ENCODE measurements at regions of chr1 and their contacts with region 1.

Region 1: DNA sequence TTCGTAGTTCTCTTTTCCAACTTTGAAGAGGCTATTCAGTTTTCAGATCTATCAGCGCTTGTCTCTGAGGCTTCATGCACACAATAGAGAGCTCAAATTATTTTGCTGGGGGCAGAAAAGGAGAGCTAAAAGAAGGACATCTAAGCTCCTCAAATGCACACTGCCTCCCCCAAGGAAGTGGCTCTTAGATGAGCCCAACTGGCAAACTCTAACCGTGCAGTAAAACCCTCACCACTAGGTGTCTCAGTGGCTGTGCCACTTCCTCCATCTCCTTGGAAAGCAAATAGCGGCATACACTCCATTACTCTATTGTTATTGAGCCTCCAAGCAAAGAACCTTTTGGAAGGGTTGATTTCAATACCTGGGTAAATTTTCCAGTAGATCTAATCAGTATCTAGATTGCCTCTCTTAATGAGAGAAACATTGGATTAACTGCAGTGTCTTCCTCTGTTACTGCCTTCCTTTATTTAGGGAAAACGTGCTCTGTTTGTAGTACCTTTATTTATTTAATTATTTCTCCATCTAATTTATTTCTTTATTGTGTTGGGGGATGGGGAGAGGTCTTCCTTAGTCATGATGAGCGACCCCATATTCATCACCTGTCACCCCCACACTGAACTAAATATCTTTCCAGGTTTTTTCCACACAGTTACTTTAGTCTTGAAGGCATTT is 9.2 kb upstream of the SFPQ start:
- DNase-seq: peak; percentile 40
- ATAC-seq: peak; percentile 100
- H3K4me3 ChIP-seq: no peak overlapping the region
- H3K27ac ChIP-seq: no peak overlapping the region
- H3K4me1 ChIP-seq: no peaks in the 10 kb centered on the region
- H3K27me3 ChIP-seq: no peaks in the 10 kb centered on the region
- CTCF ChIP-seq: peak; percentile 92 to 93 (median 92); a peak in 5 of 6 replicates
- EP300 ChIP-seq: no peak
- POLR2A ChIP-seq: no peak
- RAD21 ChIP-seq: peak; percentile 87

Region 2: DNA sequence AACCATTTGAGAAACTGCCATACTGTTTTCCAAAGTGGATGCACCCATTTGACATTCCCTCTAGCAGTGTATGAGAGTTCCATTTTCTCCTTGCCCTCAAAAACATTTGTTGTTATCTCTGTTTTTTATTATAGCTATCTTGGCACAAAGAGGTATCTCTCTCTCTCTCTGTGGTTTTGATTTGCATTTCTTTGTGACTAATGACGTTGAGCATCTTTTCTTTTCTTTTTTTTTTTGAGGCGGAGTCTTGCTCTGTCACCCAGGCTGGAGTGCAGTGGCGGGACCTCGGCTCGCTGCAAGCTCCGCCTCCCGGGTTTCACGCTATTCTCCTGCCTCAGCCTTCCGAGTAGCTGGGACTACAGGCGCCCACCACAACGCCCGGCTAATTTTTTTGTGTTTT is 153.1 kb before region 1 on chr1:
- CTCF ChIA-PET with region 1: no interaction called
- POLR2A ChIA-PET with region 1: no interaction called
- RAD21 ChIA-PET with region 1: no interaction called
- SMC1A ChIA-PET with region 1: no interaction called
- in situ Hi-C with region 1: no loop called
- intact Hi-C with region 1: no loop called
- DNase-seq: no peak
- ATAC-seq: no peak
- H3K4me3 ChIP-seq: no peak overlapping the region
- H3K27ac ChIP-seq: no peak overlapping the region
- H3K4me1 ChIP-seq: no peaks in the 10 kb centered on the region
- H3K27me3 ChIP-seq: no peaks in the 10 kb centered on the region
- CTCF ChIP-seq: no peak
- EP300 ChIP-seq: no peak
- POLR2A ChIP-seq: no peak
- RAD21 ChIP-seq: no peak

Region 3: GRCh38 chr1:35229587-35230360 is 27.6 kb after region 1 on chr1:
- CTCF ChIA-PET with region 1: interaction called, 6 read pairs
- POLR2A ChIA-PET with region 1: interaction called, 3 read pairs
- RAD21 ChIA-PET with region 1: interaction called, 5 read pairs
- SMC1A ChIA-PET with region 1: interaction called, 10 read pairs
- in situ Hi-C with region 1: no loop called
- intact Hi-C with region 1: no loop called
- DNase-seq: no peak
- ATAC-seq: peak; percentile 51
- H3K4me3 ChIP-seq: no peak overlapping the region
- H3K27ac ChIP-seq: peak overlapping the region; percentile 60
- H3K4me1 ChIP-seq: peaks cover 5% of the 10 kb centered on the region; the same call in 1 of the 2 replicates
- H3K27me3 ChIP-seq: no peaks in the 10 kb centered on the region
- CTCF ChIP-seq: no peak
- EP300 ChIP-seq: no peak
- POLR2A ChIP-seq: no peak
- RAD21 ChIP-seq: no peak

Region 4: GRCh38 chr1:35287807-35288640 is 85.8 kb after region 1 on chr1:
- CTCF ChIA-PET with region 1: interaction called, 18 read pairs
- POLR2A ChIA-PET with region 1: no interaction called
- RAD21 ChIA-PET with region 1: interaction called, 4 read pairs
- SMC1A ChIA-PET with region 1: interaction called, 4 read pairs
- in situ Hi-C with region 1: no loop called
- intact Hi-C with region 1: no loop called
- DNase-seq: no peak
- ATAC-seq: no peak
- H3K4me3 ChIP-seq: no peak overlapping the region
- H3K27ac ChIP-seq: peak overlapping the region; percentile 1
- H3K4me1 ChIP-seq: no peaks in the 10 kb centered on the region
- H3K27me3 ChIP-seq: no peaks in the 10 kb centered on the region
- CTCF ChIP-seq: 0 out of 6 replicates have a peak, but pooled peaks of 1 of the 3 experiments have one; percentile 0
- EP300 ChIP-seq: no peak
- POLR2A ChIP-seq: no peak
- RAD21 ChIP-seq: no peak

Region 5: GRCh38 chr1:35426097-35426586 is 224.0 kb after region 1 on chr1:
- CTCF ChIA-PET with region 1: interaction called, 3 read pairs
- POLR2A ChIA-PET with region 1: no interaction called
- RAD21 ChIA-PET with region 1: no interaction called
- SMC1A ChIA-PET with region 1: no interaction called
- in situ Hi-C with region 1: no loop called
- intact Hi-C with region 1: loop called (anchors 10 kb)
- DNase-seq: no peak
- ATAC-seq: no peak
- H3K4me3 ChIP-seq: no peak overlapping the region
- H3K27ac ChIP-seq: no peak overlapping the region
- H3K4me1 ChIP-seq: no peaks in the 10 kb centered on the region
- H3K27me3 ChIP-seq: no peaks in the 10 kb centered on the region
- CTCF ChIP-seq: no peak
- EP300 ChIP-seq: no peak
- POLR2A ChIP-seq: no peak
- RAD21 ChIP-seq: no peak

Region 6: GRCh38 chr1:35544978-35545377 is 342.8 kb after region 1 on chr1:
- CTCF ChIA-PET with region 1: interaction called, 4 read pairs
- POLR2A ChIA-PET with region 1: no interaction called
- RAD21 ChIA-PET with region 1: no interaction called
- SMC1A ChIA-PET with region 1: no interaction called
- in situ Hi-C with region 1: no loop called
- intact Hi-C with region 1: loop called (anchors 10 kb)
- DNase-seq: peak; percentile 50
- ATAC-seq: peak; percentile 98
- H3K4me3 ChIP-seq: no peak overlapping the region
- H3K27ac ChIP-seq: no peak overlapping the region
- H3K4me1 ChIP-seq: peaks cover 5% of the 10 kb centered on the region; the same call in 1 of the 2 replicates
- H3K27me3 ChIP-seq: no peaks in the 10 kb centered on the region
- CTCF ChIP-seq: peak; percentile 64 to 89 (median 76)
- EP300 ChIP-seq: no peak
- POLR2A ChIP-seq: no peak
- RAD21 ChIP-seq: peak; percentile 73